WTC11 (cell line): ENCODE measurements at regions of chr12 and their contacts with region 1.

Region 1: GRCh38 chr12:57078519-57079404 is at the start of gene NEMP1:
- DNase-seq: peak; percentile 96
- ATAC-seq: peak; percentile 99
- H3K4me3 Mint-ChIP-seq: peak within 1 kb of the TSS; percentile 95
- H3K27ac Mint-ChIP-seq: peak within 1 kb of the TSS; percentile 92
- H3K4me1 Mint-ChIP-seq: peaks cover 6% of the 10 kb centered on the region; the same call in 1 of the 2 replicates
- H3K27me3 Mint-ChIP-seq: no peaks in the 10 kb centered on the region
- CTCF ChIP-seq: no peak
- total RNA-seq, gene NEMP1: 38.3 to 41.9 TPM (median 39.6 TPM) in 3 replicates

Region 2: DNA sequence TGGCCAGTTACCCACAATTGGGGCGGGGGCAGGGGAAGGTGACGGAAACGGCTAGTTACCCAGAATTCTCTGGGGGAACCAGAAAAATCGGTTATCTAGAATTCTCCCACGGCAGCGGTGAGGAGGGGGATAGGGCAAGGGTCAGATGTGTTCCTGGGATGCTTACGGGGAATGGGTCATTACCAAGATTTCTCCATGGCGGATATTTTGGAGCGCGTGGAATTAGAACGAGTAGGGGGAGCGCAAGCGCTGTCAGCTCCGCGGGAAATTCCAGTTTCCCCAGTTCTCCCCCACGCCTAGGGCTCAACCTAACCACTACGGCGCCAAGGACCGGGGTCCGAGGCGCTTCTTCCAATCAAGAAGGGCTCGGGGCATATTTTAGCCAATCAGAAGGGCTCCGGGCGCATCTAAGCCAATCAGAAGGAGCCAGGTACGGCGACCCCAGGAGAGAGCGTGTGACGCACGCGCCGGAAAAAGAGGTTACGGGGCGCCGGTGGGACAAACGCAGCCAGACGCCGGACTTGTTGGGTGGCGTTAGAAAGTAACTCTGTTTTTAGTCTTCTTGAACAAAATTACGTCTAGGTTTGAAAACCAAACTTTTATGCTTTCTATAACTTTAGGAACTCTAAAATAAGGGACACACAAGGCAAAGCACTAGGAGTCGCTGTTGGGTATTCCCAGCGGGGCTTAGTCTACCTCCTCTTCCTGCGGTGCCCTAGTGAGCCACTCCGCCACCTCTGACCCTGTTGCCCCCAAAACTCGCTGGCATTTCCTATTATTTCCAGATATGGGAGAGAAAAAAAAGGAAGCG is 744.9 kb before region 1 on chr12 and contains the start of gene PAN2:
- CTCF ChIA-PET with region 1: no interaction called
- POLR2A ChIA-PET with region 1: no interaction called
- DNase-seq: peak; percentile 90
- ATAC-seq: peak; percentile 94
- H3K4me3 Mint-ChIP-seq: peak within 1 kb of the TSS; percentile 87
- H3K27ac Mint-ChIP-seq: peak within 1 kb of the TSS; percentile 98
- H3K4me1 Mint-ChIP-seq: peaks cover 38% of the 10 kb centered on the region
- H3K27me3 Mint-ChIP-seq: no peaks in the 10 kb centered on the region
- CTCF ChIP-seq: 0 out of 2 replicates have a peak, but pooled peaks have one; percentile 24
- total RNA-seq, gene PAN2: 46.7 to 58.0 TPM (median 57.5 TPM) in 3 replicates

Region 3: DNA sequence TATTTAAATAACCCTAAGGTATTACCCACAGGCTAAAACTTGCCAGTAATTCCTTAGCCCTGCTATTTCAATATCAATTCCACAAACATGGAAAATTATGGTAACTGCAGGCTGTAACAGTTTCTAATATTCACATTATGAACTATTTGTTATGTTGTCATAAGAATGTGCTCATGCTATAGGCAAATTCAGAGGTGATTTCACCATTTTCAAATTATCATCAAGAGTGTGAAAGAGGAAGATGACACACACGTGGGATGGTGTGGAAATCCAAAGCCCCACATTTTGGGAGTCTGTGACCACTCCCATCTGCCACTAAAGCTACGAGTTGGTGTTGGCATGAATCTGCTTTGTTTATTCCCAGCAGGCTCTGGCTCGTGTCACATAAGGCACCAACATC is 22.9 kb before region 1 on chr12:
- CTCF ChIA-PET with region 1: no interaction called
- POLR2A ChIA-PET with region 1: no interaction called
- DNase-seq: no peak
- ATAC-seq: no peak
- H3K4me3 Mint-ChIP-seq: no peak overlapping the region
- H3K27ac Mint-ChIP-seq: no peak overlapping the region
- H3K4me1 Mint-ChIP-seq: no peaks in the 10 kb centered on the region
- H3K27me3 Mint-ChIP-seq: no peaks in the 10 kb centered on the region
- CTCF ChIP-seq: no peak

Region 4: GRCh38 chr12:57229634-57230380 is 151.0 kb after region 1 on chr12 and contains the start of gene SHMT2:
- CTCF ChIA-PET with region 1: interaction called, 10 read pairs
- POLR2A ChIA-PET with region 1: interaction called, 3 read pairs
- DNase-seq: peak; percentile 97
- ATAC-seq: peak; percentile 41
- H3K4me3 Mint-ChIP-seq: peak within 1 kb of the TSS; percentile 98
- H3K27ac Mint-ChIP-seq: peak within 1 kb of the TSS; percentile 94
- H3K4me1 Mint-ChIP-seq: peaks cover 49% of the 10 kb centered on the region
- H3K27me3 Mint-ChIP-seq: peaks cover 53% of the 10 kb centered on the region
- CTCF ChIP-seq: no peak
- total RNA-seq, gene SHMT2: 262 to 297 TPM (median 265 TPM) in 3 replicates